Activated naive CD4-positive, alpha-beta T cell treated with anti-CD3 and anti-CD28 coated beads for 36 hours (primary cell): ENCODE measurements at regions of chr19 and their contacts with region 1.

Region 1: DNA sequence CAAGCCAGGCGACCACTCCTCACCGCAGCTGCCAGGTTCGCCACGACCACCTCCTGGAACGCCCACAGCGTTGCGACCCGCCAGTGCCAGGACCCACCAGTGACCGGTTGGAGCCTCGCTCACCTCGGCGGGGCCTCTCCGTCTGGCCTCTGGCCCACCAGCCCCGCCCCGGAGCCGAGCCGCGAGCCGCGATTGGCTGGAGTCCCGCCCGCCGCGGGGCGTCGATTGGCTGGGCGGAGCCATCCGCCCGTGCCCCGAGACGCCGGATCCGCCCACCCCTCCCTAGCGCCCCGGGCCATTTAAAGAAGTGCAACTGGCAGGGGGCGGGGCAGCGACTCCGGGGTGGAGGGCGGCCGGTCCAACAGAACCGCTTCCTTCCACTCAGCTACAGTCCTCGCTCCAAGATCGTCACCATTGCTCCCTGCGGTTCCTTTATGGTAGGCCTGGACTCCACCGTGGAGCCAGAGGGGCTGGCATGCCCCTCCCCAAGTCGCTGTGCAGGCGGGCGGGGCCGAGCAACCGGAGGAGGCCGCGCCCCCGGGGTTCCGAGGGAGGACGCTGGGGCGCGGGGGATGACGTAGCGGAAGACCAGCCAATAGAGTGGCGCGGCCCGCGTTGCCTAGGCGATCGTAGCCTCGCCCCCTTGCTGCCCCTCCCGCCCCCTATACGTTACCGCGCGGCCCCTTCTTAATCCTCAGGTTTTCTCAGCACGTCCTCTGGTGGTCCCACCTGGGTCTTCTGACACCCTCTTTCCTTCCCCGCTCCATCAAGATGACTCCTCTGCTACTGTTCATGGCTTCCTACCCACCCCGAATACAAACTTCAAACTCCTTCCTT is at the start of gene SERTAD3:
- DNase-seq: peak; percentile 96
- H3K4me3 Mint-ChIP-seq: peak within 1 kb of the TSS; percentile 97
- H3K27ac Mint-ChIP-seq: peak within 1 kb of the TSS; percentile 92
- H3K4me1 Mint-ChIP-seq: peaks cover 19% of the 10 kb centered on the region
- H3K27me3 Mint-ChIP-seq: no peaks in the 10 kb centered on the region
- total RNA-seq, gene SERTAD3: 3.8 to 7.3 TPM

Region 2: DNA sequence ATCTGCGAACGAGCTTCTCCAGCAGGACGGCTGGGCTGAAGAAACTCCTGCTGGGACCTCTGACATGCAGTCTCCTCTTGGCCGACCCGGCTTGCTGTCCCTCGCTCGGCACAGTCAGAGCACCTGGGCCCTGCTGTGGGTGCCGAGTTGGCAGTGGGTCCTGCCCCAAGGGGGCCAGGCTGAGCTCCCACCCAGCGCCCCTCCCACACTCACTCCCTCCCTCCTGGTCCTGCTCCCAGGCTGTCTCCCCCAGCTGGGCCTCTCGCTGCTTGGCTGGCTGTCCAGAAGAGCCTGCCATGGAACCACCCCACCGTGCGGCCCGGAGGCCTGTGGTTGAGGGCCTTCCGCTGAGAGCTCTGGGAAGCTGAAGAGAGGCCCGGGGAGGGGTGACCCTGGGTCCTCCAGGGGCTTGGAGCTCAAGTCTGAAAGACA is 165.3 kb before region 1 on chr19:
- CTCF ChIA-PET with region 1: no interaction called
- intact Hi-C with region 1: no loop called
- DNase-seq: no peak
- H3K4me3 Mint-ChIP-seq: no peak overlapping the region
- H3K27ac Mint-ChIP-seq: no peak overlapping the region
- H3K4me1 Mint-ChIP-seq: peaks cover 83% of the 10 kb centered on the region
- H3K27me3 Mint-ChIP-seq: no peaks in the 10 kb centered on the region

Region 3: DNA sequence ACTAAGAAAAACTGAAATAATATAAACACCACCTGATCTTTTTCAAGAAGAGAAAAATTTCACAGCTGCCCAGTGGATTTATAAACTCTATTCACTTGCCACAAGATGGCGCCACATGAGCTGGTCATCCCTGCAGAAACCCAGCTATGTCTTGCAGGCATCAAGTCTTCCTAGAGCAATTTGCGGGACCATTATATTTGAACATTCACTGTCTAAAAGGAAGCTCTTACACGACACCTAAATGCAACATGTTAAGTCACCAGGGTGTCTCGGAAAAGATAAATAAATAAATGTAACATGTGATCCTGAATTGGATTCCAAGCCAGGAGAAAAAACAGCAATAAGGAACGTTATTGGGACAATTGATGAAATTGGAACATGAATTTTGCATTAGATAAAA is 139.0 kb before region 1 on chr19:
- CTCF ChIA-PET with region 1: no interaction called
- intact Hi-C with region 1: loop called (anchors 1 kb)
- DNase-seq: peak; percentile 90
- H3K4me3 Mint-ChIP-seq: no peak overlapping the region
- H3K27ac Mint-ChIP-seq: no peak overlapping the region
- H3K4me1 Mint-ChIP-seq: peaks cover 2% of the 10 kb centered on the region
- H3K27me3 Mint-ChIP-seq: no peaks in the 10 kb centered on the region

Region 4: GRCh38 chr19:40425450-40426287 is 18.7 kb before region 1 on chr19 and contains the start of gene SERTAD1:
- CTCF ChIA-PET with region 1: interaction called, 11 read pairs
- intact Hi-C with region 1: loop called (anchors 1 kb)
- DNase-seq: peak; percentile 100
- H3K4me3 Mint-ChIP-seq: peak within 1 kb of the TSS; percentile 89
- H3K27ac Mint-ChIP-seq: peak within 1 kb of the TSS; percentile 97
- H3K4me1 Mint-ChIP-seq: peaks cover 21% of the 10 kb centered on the region
- H3K27me3 Mint-ChIP-seq: no peaks in the 10 kb centered on the region
- total RNA-seq, gene SERTAD1: 8.8 to 9.2 TPM

Region 5: DNA sequence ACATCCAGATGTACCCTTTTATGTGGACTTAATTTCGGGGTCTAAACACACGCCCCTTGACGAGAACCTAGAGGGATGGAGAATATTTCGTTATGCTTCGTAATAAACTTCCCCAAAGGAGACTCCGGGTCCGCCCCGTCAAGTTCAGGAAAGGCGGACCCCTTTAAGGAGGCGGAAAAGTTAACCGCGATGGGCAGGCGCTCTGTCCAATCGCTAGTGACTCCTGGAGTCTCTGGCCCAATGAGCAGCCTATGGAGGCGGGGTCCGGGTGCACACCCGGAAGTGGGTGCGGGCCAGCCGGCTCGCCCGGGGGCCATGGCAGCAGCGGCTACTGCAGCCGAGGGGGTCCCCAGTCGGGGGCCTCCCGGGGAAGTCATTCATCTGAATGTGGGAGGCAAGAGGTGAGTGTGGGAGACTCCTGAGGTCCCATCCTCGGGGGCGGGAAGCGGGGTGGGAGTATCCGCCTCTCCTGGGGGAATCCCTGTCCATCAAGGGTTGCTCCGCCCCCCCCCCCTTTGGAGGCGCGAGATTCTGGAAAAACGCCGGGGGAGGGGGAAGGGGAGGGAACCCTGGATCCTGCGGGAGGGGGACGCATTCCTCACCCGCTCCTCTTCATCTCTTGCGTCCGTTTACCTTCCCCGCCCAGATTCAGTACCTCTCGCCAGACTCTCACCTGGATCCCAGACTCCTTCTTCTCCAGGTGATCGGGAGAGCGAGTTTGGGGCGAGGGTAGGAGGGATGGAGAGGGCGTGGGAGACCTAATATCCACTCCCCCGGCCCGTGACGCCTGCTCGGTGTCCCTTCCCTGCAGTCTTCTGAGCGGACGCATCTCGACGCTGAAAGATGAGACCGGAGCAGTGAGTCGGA is 132.4 kb after region 1 on chr19 and contains the start of gene SHKBP1:
- CTCF ChIA-PET with region 1: no interaction called
- intact Hi-C with region 1: loop called (anchors 1 kb)
- DNase-seq: peak; percentile 96
- H3K4me3 Mint-ChIP-seq: peak within 1 kb of the TSS; percentile 87
- H3K27ac Mint-ChIP-seq: peak within 1 kb of the TSS; percentile 65
- H3K4me1 Mint-ChIP-seq: peaks cover 16% of the 10 kb centered on the region
- H3K27me3 Mint-ChIP-seq: no peaks in the 10 kb centered on the region
- total RNA-seq, gene SHKBP1: 90.1 to 99.4 TPM

Region 6: DNA sequence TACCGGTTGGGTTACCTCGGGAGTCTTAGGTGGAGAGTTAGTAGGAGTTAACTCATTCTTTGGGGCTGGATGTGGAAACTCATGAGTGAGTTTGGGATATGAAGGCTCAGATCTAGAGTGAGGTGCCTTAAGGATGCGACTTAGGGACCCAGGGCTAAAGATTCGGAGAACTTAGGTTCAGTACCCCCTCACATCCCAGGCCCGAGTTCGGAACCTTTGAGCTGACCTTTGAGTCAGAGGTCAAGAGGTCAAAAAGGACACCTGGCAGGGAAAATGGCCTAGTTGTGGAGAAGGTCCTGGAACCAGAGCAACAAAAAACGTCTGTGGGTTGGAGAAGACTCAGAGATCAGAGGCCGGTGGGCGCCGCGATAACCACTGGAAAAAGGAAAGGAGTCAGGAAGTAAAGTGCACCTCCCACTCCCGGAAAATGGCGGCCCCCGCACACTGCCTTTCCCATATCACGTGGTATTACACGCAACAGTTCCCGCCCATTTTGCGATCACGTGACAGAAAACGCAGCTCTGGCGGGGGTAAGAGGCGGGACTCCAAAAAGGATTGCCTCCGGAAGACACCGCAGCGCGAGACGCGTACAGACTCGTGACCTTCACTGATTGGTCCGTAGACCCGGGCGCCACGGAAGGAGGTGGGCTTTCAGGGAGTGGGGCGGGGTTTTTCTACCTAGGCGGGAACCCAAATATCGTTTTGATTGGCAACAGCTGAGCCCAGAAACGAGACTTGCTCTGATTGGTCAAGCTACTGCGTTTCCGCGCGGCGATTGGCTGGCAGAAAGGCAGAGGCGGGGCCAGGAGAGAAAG is 305.9 kb after region 1 on chr19 and contains the start of gene ACTMAP:
- CTCF ChIA-PET with region 1: no interaction called
- intact Hi-C with region 1: loop called (anchors 5 kb)
- DNase-seq: peak; percentile 100
- H3K4me3 Mint-ChIP-seq: peak within 1 kb of the TSS; percentile 99
- H3K27ac Mint-ChIP-seq: peak within 1 kb of the TSS; percentile 99
- H3K4me1 Mint-ChIP-seq: peaks cover 33% of the 10 kb centered on the region
- H3K27me3 Mint-ChIP-seq: no peaks in the 10 kb centered on the region
- total RNA-seq, gene ACTMAP: 23.0 to 25.0 TPM